ENCODE measurements at regions of chr1 and their contacts with region 1.

Region 1: DNA sequence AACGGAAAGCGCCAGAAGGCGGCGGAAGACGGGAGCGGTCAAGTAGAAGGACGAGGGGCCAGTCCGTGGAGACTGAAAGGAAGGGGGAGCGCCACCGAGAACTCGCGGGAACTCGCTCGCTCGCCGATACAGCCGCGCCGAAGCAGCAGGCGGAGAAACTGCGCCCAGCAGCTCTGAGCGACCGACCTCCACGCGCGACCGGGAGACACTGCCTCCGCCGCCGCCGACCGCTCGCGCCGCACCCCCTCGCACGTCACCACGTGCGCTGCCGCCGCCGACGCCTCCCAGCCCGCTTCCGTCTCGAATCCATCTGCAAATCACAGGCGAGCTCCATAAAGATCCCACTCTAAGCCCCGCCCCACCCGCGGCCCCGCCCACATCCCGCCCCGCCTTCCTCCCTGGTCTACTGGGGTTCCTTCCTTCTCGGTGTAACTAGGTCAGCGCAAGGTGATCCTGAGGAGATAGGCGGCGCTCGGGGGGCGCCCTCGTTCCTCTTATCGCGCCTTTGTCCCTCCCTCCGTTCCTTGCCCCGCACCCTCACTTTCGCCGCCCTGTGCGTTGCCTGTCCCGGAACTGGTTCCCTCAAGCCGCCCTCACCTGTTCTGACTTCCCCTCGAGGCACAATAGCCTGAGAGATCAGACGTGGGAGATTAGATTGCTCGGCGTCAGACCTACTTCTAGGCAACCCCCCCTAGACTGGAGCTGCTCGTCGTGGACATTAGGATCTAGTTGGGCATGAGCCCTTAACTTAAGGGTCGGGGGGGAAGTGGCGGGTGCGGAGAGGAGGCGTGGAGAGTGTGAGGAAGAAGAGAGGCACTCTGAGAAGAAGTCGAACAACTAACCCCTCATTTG is at the start of gene IVNS1ABP:
- DNase-seq: peak; percentile 94
- H3K4me3 ChIP-seq: peak within 1 kb of the TSS; percentile 75 to 76 (median 75)
- H3K27ac ChIP-seq: peak within 1 kb of the TSS; percentile 98
- H3K4me1 ChIP-seq: peaks cover 10% of the 10 kb centered on the region
- H3K27me3 ChIP-seq: no peaks in the 10 kb centered on the region
- CTCF ChIP-seq: peak; percentile 6 to 46
- total RNA-seq, gene IVNS1ABP: 159 to 351 TPM

Region 2: DNA sequence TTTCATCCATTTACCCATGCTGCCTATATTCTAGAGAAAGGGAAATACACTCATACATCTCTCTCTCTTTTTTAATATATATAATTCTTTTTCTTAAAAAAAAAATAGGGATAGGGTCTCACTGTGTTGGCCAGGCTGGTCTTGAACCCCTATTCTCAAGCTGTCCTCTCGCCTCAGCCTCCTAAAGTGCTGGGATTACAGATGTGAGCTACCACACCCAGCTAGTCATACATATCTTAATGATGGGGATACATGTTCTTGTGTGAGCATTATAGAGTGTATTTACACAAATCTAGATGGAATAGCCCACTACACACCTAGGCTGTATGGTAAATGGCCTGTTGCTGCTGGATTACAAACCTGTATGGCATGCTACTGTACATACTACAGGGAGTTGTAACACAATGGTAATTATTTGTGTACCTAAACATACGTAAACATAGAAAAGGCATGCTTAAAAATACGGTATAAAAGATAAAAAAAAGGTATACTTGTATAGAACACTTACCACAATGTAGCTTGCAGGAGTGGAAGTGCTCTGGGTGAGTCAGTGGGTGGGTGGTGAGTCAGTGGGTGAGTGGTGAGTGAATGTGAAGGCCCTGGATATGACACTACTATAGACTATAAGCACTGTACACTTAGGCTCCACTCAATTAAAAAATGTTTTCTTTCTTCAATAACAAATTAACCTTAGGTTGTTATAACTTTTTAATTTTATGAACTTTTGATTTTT is 73.1 kb before region 1 on chr1:
- CTCF ChIA-PET with region 1: no interaction called
- dilution Hi-C with region 1: no loop called
- in situ Hi-C with region 1: no loop called
- intact Hi-C with region 1: loop called (anchors 5 kb)
- DNase-seq: peak; percentile 85
- H3K4me3 ChIP-seq: no peak overlapping the region
- H3K27ac ChIP-seq: peak overlapping the region; percentile 9
- H3K4me1 ChIP-seq: peaks cover 12% of the 10 kb centered on the region
- H3K27me3 ChIP-seq: no peaks in the 10 kb centered on the region
- CTCF ChIP-seq: no peak

Region 3: DNA sequence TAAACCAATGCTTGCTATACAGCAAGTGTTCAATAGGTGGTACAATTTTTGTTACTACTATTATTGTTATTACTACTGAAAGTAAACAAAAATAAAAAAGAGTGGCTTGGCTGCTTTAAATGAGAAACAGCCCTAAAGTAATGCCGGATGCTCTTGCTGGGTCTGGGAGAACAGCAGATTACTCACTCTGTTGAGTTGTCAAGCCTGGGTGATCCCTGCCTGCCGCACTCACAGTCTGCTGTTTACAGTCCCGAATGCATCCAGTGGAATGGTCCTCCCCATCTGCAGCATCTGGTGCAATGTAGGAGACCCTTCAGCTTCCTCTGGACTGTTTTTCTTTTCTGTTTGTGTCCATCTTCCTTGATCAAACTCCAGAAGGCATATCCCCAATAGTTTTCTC is 102.5 kb after region 1 on chr1:
- CTCF ChIA-PET with region 1: no interaction called
- dilution Hi-C with region 1: loop called (anchors 5 kb)
- in situ Hi-C with region 1: no loop called
- intact Hi-C with region 1: no loop called
- DNase-seq: no peak
- H3K4me3 ChIP-seq: no peak overlapping the region
- H3K27ac ChIP-seq: no peak overlapping the region
- H3K4me1 ChIP-seq: no peaks in the 10 kb centered on the region
- H3K27me3 ChIP-seq: no peaks in the 10 kb centered on the region
- CTCF ChIP-seq: no peak

Region 4: GRCh38 chr1:185520188-185520935 is 203.1 kb after region 1 on chr1:
- CTCF ChIA-PET with region 1: no interaction called
- dilution Hi-C with region 1: no loop called
- in situ Hi-C with region 1: no loop called
- intact Hi-C with region 1: loop called (anchors 5 kb)
- DNase-seq: peak; percentile 87
- H3K4me3 ChIP-seq: peak overlapping the region in 1 of 3 experiments; percentile 12
- H3K27ac ChIP-seq: peak overlapping the region; percentile 93
- H3K4me1 ChIP-seq: peaks cover 15% of the 10 kb centered on the region
- H3K27me3 ChIP-seq: no peaks in the 10 kb centered on the region
- CTCF ChIP-seq: no peak

Region 5: DNA sequence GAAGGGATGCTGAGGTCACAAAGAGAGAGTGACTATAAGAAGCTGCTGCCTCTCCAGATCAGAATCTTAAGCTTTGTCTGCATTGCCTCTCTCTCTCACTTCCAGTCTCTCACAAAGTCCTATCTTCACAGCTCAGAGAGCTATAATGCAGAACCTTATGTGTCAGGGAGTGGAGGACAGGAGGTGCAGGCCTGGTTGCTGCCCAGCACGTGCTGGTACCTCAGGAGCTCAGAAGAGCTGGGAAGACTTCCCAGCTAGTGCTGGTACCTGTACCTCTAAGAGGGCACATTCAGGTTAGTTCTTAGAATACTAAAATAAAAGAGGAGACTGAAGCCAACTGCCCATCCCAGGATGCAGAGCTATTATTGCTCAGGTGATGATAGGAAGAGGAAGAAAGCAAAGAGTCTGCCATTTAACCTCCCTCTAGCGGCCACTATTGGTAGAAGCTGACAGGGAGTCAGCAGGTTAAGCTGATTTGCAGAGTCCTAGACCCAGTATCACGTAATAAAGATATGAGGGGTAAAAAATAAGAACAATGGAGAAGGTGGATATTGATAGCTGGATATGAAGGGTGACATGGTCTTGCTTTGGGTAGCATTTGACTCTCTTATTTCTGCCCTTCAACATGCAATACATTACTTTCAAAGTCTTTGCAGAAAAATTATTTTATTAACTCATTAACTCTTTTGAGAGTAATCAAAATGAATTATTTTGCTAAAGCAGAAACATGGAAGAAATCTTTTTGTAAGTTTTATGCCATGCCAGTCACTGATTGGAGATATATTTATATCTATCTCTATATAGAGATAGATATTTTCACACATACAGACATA is 278.8 kb after region 1 on chr1:
- CTCF ChIA-PET with region 1: interaction called, 6 read pairs
- dilution Hi-C with region 1: no loop called
- in situ Hi-C with region 1: no loop called
- intact Hi-C with region 1: loop called (anchors 1 kb)
- DNase-seq: peak; percentile 44
- H3K4me3 ChIP-seq: no peak overlapping the region
- H3K27ac ChIP-seq: no peak overlapping the region
- H3K4me1 ChIP-seq: peaks cover 8% of the 10 kb centered on the region
- H3K27me3 ChIP-seq: no peaks in the 10 kb centered on the region
- CTCF ChIP-seq: peak; percentile 77 to 88

Region 6: DNA sequence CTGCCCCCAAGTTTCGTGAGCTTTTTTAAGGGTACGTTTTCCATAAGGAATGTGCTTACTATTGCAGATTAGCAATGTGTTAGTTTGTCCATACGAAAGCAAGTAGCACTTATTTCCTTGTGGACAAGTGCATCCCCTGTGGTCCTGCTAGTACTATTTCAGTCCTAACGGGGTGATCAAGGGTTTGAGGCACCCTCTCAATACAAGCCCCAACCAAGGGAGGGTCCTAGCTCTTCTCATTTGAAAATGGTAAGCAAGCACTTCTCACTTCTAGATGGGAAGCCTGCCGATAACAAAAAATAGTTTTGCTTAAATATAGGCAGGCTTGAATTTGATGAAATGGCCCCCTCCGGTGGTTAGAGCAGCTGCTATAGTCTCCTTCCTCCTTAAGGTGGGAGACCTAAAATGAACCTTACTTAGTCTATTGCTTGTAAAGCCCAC is 352.9 kb after region 1 on chr1:
- CTCF ChIA-PET with region 1: no interaction called
- dilution Hi-C with region 1: no loop called
- in situ Hi-C with region 1: loop called in 1 of 2 experiments (anchors 10 kb)
- intact Hi-C with region 1: loop called (anchors 1 kb)
- DNase-seq: peak; percentile 35
- H3K4me3 ChIP-seq: no peak overlapping the region
- H3K27ac ChIP-seq: no peak overlapping the region
- H3K4me1 ChIP-seq: no peaks in the 10 kb centered on the region
- H3K27me3 ChIP-seq: no peaks in the 10 kb centered on the region
- CTCF ChIP-seq: peak; percentile 54 to 66